ENCODE measurements at regions of chr3 and their contacts with region 1.

Region 1: GRCh38 chr3:159258934-159259333 is 457.1 kb downstream of the MFSD1 start:
- DNase-seq: no peak
- CTCF ChIP-seq: no peak

Region 2: GRCh38 chr3:158845765-158846350 is 413.1 kb before region 1 on chr3:
- in situ Hi-C with region 1: loop called (anchors 5 kb)
- DNase-seq: peak; percentile 64
- CTCF ChIP-seq: peak; percentile 49